A673 (cell line): ENCODE measurements at regions of chr1 and their contacts with region 1.

Region 1: DNA sequence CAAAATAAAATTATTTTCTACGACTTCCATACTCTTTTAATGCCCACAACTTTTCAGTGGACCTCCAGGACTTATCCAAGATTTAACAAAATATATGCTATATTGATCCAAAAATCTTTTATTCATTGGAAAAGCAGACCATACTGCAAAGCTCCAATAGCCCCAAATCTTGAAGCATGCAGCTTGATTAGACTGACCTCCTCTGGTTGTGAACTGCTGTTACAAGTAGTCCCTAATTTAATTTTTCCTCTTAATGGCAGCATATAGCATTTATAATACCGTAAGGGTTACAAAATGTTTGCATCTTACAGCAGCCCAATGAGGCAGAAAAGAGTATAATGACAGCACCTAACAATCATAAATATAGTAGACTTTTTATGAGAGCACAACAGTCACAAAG is 49.8 kb downstream of the TPR start:
- DNase-seq: peak; percentile 56
- H3K4me3 ChIP-seq: no peak overlapping the region
- H3K27ac ChIP-seq: no peak overlapping the region
- H3K4me1 ChIP-seq: no peaks in the 10 kb centered on the region
- H3K27me3 ChIP-seq: no peaks in the 10 kb centered on the region
- CTCF ChIP-seq: peak; percentile 61

Region 2: DNA sequence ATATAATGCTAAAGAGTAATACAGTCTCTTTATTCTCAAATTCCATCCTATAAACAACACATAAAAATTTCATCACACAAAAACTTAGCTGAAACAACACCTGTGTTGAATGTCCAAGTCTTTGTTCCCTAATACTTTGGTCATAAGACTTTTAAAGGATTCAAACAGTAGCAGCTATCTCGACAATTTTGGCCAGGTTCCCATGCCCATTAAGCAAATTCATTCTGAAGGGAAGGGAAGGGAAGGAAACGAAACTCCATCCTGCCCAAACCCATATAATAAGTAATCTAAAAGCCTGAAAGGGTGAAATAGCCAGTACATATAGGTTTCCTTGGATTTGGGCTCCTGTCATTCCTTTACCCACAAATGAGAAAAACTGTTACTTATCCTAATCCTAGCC is 1015.7 kb before region 1 on chr1:
- CTCF ChIA-PET with region 1: no interaction called
- POLR2A ChIA-PET with region 1: no interaction called
- intact Hi-C with region 1: loop called (anchors 10 kb)
- DNase-seq: peak; percentile 66
- H3K4me3 ChIP-seq: no peak overlapping the region
- H3K27ac ChIP-seq: no peak overlapping the region
- H3K4me1 ChIP-seq: peaks cover 31% of the 10 kb centered on the region
- H3K27me3 ChIP-seq: no peaks in the 10 kb centered on the region
- CTCF ChIP-seq: no peak

Region 3: DNA sequence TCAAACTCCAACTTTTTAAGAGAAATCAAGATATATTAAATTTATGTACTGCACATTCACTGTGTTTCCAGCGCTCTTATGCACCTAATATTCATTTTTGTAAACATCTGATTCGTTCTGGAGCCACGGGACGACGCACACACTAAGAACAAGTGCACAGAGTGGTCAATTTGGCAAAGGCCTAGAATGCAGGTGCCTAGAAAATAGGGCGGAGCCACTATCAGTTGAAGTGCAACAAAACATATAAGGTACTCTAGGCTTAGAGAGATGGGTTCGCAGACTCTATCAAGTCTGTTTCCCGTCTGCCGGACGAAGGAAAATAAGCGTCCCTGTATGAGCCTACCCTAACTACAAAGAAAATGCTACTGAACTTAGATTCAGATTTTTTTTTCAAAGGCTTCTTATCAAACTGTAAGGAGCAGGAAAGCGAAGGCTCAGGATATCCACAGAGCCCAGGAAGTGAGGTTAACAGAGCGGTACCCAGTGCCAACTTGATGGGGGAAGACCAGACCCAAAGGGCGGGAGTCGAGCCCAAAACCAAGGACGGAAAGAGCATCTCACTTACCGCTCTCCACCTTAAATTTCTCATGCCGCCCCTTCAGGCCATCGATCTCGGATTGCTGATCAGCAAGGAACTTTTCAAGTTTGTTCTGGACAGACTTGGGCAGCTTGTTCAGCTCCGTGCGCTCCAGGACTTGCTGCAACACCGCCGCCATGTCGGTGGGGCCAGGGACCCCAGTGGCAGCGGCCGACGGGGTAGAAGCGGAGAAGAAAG is 49.3 kb after region 1 on chr1:
- CTCF ChIA-PET with region 1: interaction called, 5 read pairs
- POLR2A ChIA-PET with region 1: no interaction called
- intact Hi-C with region 1: loop called (anchors 2 kb)
- DNase-seq: peak; percentile 28
- H3K4me3 ChIP-seq: peak overlapping the region; percentile 78
- H3K27ac ChIP-seq: peak overlapping the region; percentile 98
- H3K4me1 ChIP-seq: peaks cover 15% of the 10 kb centered on the region
- H3K27me3 ChIP-seq: no peaks in the 10 kb centered on the region
- CTCF ChIP-seq: no peak